H1 (cell line): ENCODE measurements at regions of chr1 and their contacts with region 1.

Region 1: GRCh38 chr1:30847358-30847972 is 61.1 kb downstream of the SDC3 start:
- DNase-seq: peak in 1 of 2 experiments; percentile 72
- H3K4me3 ChIP-seq: no peak overlapping the region
- H3K27ac ChIP-seq: no peak overlapping the region; the same call in 1 of the 2 replicates
- H3K4me1 ChIP-seq: peaks cover 0 to 20% (median 15%) of the 10 kb centered on the region in 4 experiments; a peak in 6 of 7 replicates
- H3K27me3 ChIP-seq: no peaks in the 10 kb centered on the region
- CTCF ChIP-seq: no peak
- EP300 ChIP-seq: no peak
- POLR2A ChIP-seq: no peak
- RAD21 ChIP-seq: no peak

Region 2: GRCh38 chr1:30830537-30830936 is 16.9 kb before region 1 on chr1:
- CTCF ChIA-PET with region 1: interaction called, 20 read pairs
- POLR2A ChIA-PET with region 1: interaction called, 3 read pairs
- DNase-seq: no peak
- H3K4me3 ChIP-seq: no peak overlapping the region
- H3K27ac ChIP-seq: no peak overlapping the region
- H3K4me1 ChIP-seq: no peaks in the 10 kb centered on the region
- H3K27me3 ChIP-seq: peaks cover 0 to 5% (median under 1%) of the 10 kb centered on the region in 4 experiments; a peak in 5 of 7 replicates
- CTCF ChIP-seq: no peak
- EP300 ChIP-seq: no peak
- POLR2A ChIP-seq: no peak
- RAD21 ChIP-seq: no peak

Region 3: GRCh38 chr1:30902182-30902581 is 54.7 kb after region 1 on chr1:
- CTCF ChIA-PET with region 1: interaction called, 12 read pairs
- POLR2A ChIA-PET with region 1: no interaction called
- DNase-seq: no peak
- H3K4me3 ChIP-seq: no peak overlapping the region
- H3K27ac ChIP-seq: no peak overlapping the region
- H3K4me1 ChIP-seq: peaks cover 4 to 26% (median 12%) of the 10 kb centered on the region in 4 experiments
- H3K27me3 ChIP-seq: peaks cover 0 to 8% (median 4%) of the 10 kb centered on the region in 4 experiments; a peak in 4 of 7 replicates
- CTCF ChIP-seq: no peak
- EP300 ChIP-seq: no peak
- POLR2A ChIP-seq: no peak
- RAD21 ChIP-seq: no peak

Region 4: GRCh38 chr1:31027693-31028526 is 180.4 kb after region 1 on chr1:
- CTCF ChIA-PET with region 1: no interaction called
- POLR2A ChIA-PET with region 1: no interaction called
- DNase-seq: no peak
- H3K4me3 ChIP-seq: no peak overlapping the region
- H3K27ac ChIP-seq: no peak overlapping the region
- H3K4me1 ChIP-seq: peaks cover 0 to 11% (median 3%) of the 10 kb centered on the region in 4 experiments; a peak in 2 of 7 replicates
- H3K27me3 ChIP-seq: no peaks in the 10 kb centered on the region
- CTCF ChIP-seq: no peak
- EP300 ChIP-seq: no peak
- POLR2A ChIP-seq: no peak
- RAD21 ChIP-seq: no peak

Region 5: GRCh38 chr1:31038360-31038759 is 190.9 kb after region 1 on chr1:
- CTCF ChIA-PET with region 1: no interaction called
- POLR2A ChIA-PET with region 1: no interaction called
- DNase-seq: no peak
- H3K4me3 ChIP-seq: no peak overlapping the region
- H3K27ac ChIP-seq: no peak overlapping the region
- H3K4me1 ChIP-seq: peaks cover 0 to 7% (median under 1%) of the 10 kb centered on the region in 4 experiments; a peak in 1 of 7 replicates
- H3K27me3 ChIP-seq: no peaks in the 10 kb centered on the region
- CTCF ChIP-seq: no peak
- EP300 ChIP-seq: no peak
- POLR2A ChIP-seq: no peak
- RAD21 ChIP-seq: no peak

Region 6: GRCh38 chr1:31166462-31166861 is 319.0 kb after region 1 on chr1:
- CTCF ChIA-PET with region 1: no interaction called
- POLR2A ChIA-PET with region 1: no interaction called
- DNase-seq: no peak
- H3K4me3 ChIP-seq: no peak overlapping the region
- H3K27ac ChIP-seq: no peak overlapping the region
- H3K4me1 ChIP-seq: peaks cover 0 to 7% (median 0%) of the 10 kb centered on the region in 4 experiments; a peak in 2 of 7 replicates
- H3K27me3 ChIP-seq: no peaks in the 10 kb centered on the region
- CTCF ChIP-seq: no peak
- EP300 ChIP-seq: no peak
- POLR2A ChIP-seq: no peak
- RAD21 ChIP-seq: no peak